PC-9 (cell line): ENCODE measurements at regions of chr15 and their contacts with region 1.

Region 1: DNA sequence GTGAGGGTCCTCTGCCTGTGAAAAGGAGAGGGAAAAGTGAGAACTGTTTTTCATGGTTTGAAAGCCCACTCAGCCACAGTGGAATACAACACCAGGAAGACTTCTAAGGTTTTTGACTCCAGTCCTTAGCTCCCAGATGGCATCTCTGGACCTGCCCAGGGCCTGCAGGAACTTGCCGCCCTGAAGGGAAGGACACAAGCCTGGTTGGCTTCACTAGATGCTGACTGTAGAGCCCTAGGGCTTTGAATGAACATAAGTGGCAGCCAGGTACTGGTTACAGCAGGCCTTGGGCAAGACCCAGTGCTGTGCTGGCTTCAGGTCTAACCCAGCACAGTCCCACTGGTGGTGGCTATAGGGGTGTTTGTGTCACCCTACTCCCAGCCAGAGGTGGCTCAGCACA is 21.3 kb upstream of the TMEM266 start:
- DNase-seq: no peak
- H3K4me3 ChIP-seq: no peak overlapping the region
- H3K27ac ChIP-seq: no peak overlapping the region
- H3K4me1 ChIP-seq: no peaks in the 10 kb centered on the region
- H3K27me3 ChIP-seq: no peaks in the 10 kb centered on the region
- CTCF ChIP-seq: no peak

Region 2: GRCh38 chr15:75982468-75982867 is 56.0 kb before region 1 on chr15:
- CTCF ChIA-PET with region 1: no interaction called
- POLR2A ChIA-PET with region 1: interaction called, 10 read pairs
- intact Hi-C with region 1: no loop called
- DNase-seq: no peak
- H3K4me3 ChIP-seq: no peak overlapping the region
- H3K27ac ChIP-seq: no peak overlapping the region
- H3K4me1 ChIP-seq: no peaks in the 10 kb centered on the region
- H3K27me3 ChIP-seq: no peaks in the 10 kb centered on the region
- CTCF ChIP-seq: no peak